ENCODE measurements at regions of chr6 and their contacts with region 1.

Region 1: GRCh38 chr6:53484476-53485280 is 60.2 kb downstream of the GCLC start:
- DNase-seq: peak; percentile 82
- ATAC-seq: no peak
- H3K4me3 Mint-ChIP-seq: no peak overlapping the region
- H3K27ac Mint-ChIP-seq: no peak overlapping the region
- H3K4me1 Mint-ChIP-seq: peaks cover 11% of the 10 kb centered on the region
- H3K27me3 Mint-ChIP-seq: peaks cover 21% of the 10 kb centered on the region

Region 2: DNA sequence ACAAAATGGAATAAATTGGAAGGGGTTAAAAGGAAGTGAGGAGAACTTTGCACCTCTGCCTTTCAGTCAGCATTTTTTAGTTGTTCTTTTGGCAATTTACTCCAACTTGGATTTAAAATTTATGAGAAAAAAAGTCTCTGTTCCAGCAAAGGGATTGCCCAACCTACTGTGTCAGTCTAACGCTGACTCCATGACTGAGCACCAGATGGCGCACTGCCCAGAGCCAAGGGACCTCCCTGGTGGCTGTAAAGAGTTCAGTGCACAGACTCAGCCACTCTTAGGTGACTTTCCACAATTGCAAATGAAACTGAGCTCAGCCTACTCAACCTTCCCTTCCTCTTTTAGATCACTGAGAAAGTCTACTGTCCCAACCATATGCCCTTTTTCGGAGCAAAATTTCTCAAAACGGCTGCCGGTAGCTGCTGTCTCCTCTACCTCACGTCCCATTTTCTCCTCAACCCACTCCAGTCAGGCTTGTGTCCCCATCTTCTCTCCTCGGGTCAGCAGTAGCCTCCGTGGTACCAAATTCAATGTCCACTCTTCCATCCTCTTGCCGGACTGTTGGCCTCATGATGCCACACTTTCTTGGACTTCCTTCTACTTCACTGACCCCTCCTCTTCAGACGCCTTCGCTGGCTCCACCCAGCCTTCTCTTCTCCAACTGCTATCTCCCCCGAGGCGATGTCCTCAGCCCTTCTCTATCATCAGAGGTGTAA is 760.1 kb before region 1 on chr6:
- CTCF ChIA-PET with region 1: no interaction called
- POLR2A ChIA-PET with region 1: no interaction called
- intact Hi-C with region 1: loop called in 1 of 2 experiments (anchors 10 kb)
- DNase-seq: peak; percentile 82
- ATAC-seq: peak; percentile 95
- H3K4me3 Mint-ChIP-seq: no peak overlapping the region
- H3K27ac Mint-ChIP-seq: no peak overlapping the region
- H3K4me1 Mint-ChIP-seq: no peaks in the 10 kb centered on the region
- H3K27me3 Mint-ChIP-seq: peaks cover 2% of the 10 kb centered on the region

Region 3: GRCh38 chr6:52815167-52816092 is 669.2 kb before region 1 on chr6:
- CTCF ChIA-PET with region 1: no interaction called
- POLR2A ChIA-PET with region 1: no interaction called
- intact Hi-C with region 1: loop called in 1 of 2 experiments (anchors 10 kb)
- DNase-seq: peak; percentile 62
- ATAC-seq: peak; percentile 85
- H3K4me3 Mint-ChIP-seq: no peak overlapping the region
- H3K27ac Mint-ChIP-seq: no peak overlapping the region
- H3K4me1 Mint-ChIP-seq: no peaks in the 10 kb centered on the region
- H3K27me3 Mint-ChIP-seq: peaks cover 4% of the 10 kb centered on the region

Region 4: GRCh38 chr6:53233309-53233708 is 251.4 kb before region 1 on chr6:
- CTCF ChIA-PET with region 1: interaction called, 10 read pairs
- POLR2A ChIA-PET with region 1: no interaction called
- intact Hi-C with region 1: no loop called
- DNase-seq: no peak
- ATAC-seq: no peak
- H3K4me3 Mint-ChIP-seq: no peak overlapping the region
- H3K27ac Mint-ChIP-seq: no peak overlapping the region
- H3K4me1 Mint-ChIP-seq: peaks cover 32% of the 10 kb centered on the region
- H3K27me3 Mint-ChIP-seq: no peaks in the 10 kb centered on the region

Region 5: GRCh38 chr6:53410508-53411258 is 74.0 kb before region 1 on chr6:
- CTCF ChIA-PET with region 1: interaction called, 10 read pairs
- POLR2A ChIA-PET with region 1: no interaction called
- intact Hi-C with region 1: loop called (anchors 1 to 2 kb)
- DNase-seq: peak; percentile 74
- ATAC-seq: peak; percentile 94
- H3K4me3 Mint-ChIP-seq: no peak overlapping the region
- H3K27ac Mint-ChIP-seq: no peak overlapping the region
- H3K4me1 Mint-ChIP-seq: no peaks in the 10 kb centered on the region
- H3K27me3 Mint-ChIP-seq: no peaks in the 10 kb centered on the region

Region 6: GRCh38 chr6:53437557-53438202 is 47.0 kb before region 1 on chr6:
- CTCF ChIA-PET with region 1: interaction called, 4 read pairs
- POLR2A ChIA-PET with region 1: interaction called, 5 read pairs
- intact Hi-C with region 1: loop called (anchors 1 to 5 kb)
- DNase-seq: peak; percentile 34
- ATAC-seq: peak; percentile 53
- H3K4me3 Mint-ChIP-seq: no peak overlapping the region
- H3K27ac Mint-ChIP-seq: no peak overlapping the region
- H3K4me1 Mint-ChIP-seq: peaks cover 28% of the 10 kb centered on the region
- H3K27me3 Mint-ChIP-seq: peaks cover 3% of the 10 kb centered on the region

Region 7: GRCh38 chr6:53998303-53998702 is 513.6 kb after region 1 on chr6:
- CTCF ChIA-PET with region 1: no interaction called
- POLR2A ChIA-PET with region 1: no interaction called
- intact Hi-C with region 1: no loop called
- DNase-seq: no peak
- ATAC-seq: no peak
- H3K4me3 Mint-ChIP-seq: no peak overlapping the region
- H3K27ac Mint-ChIP-seq: no peak overlapping the region
- H3K4me1 Mint-ChIP-seq: no peaks in the 10 kb centered on the region
- H3K27me3 Mint-ChIP-seq: peaks cover 4% of the 10 kb centered on the region

Measured in activated CD4-positive, alpha-beta T cell treated with anti-CD3 and anti-CD28 coated beads for 36 hours (primary cell).